ENCODE measurements at regions of chr11 and their contacts with region 1.

Region 1: DNA sequence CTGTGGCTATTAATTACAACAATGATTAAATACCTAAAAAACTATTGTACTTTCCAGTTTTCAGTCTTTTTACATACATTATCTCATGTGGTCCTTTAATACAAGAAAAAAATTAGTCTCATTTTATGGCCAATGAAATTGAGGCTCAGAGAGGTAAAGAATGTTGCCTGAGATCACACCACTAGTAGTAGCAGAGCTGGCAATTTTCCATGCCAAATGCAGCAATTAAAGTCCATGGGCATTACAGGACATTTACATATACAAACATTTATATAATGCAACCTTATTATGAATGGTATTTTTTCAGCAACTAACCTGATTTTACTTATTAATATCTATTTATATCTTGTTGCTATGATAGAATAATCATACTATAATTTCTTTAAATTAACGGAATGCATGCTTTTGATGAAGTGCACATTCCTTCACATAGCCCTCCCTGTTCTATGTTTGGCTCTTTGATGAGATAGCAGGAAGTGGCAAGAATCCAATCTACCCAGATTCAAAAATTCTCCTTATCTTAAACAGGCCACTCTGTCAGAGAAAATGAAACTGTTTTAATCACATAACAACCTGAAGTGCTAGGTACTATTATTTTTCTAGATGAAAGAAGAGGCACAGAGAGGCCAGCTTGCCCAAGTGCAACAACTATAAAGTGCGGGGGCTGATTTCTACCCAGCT is 120.9 kb upstream of the LDLRAD3 start:
- DNase-seq: peak; percentile 15
- H3K4me3 Mint-ChIP-seq: no peak overlapping the region
- H3K27ac Mint-ChIP-seq: peak overlapping the region; percentile 29
- H3K4me1 Mint-ChIP-seq: peaks cover 17% of the 10 kb centered on the region
- H3K27me3 Mint-ChIP-seq: no peaks in the 10 kb centered on the region
- CTCF ChIP-seq: no peak

Region 2: GRCh38 chr11:35662649-35663407 is 160.1 kb before region 1 on chr11 and contains the start of gene TRIM44:
- CTCF ChIA-PET with region 1: interaction called, 3 read pairs
- POLR2A ChIA-PET with region 1: no interaction called
- intact Hi-C with region 1: loop called (anchors 5 kb)
- DNase-seq: peak; percentile 84
- H3K4me3 Mint-ChIP-seq: peak within 1 kb of the TSS; percentile 100
- H3K27ac Mint-ChIP-seq: peak within 1 kb of the TSS; percentile 100
- H3K4me1 Mint-ChIP-seq: peaks cover 25% of the 10 kb centered on the region
- H3K27me3 Mint-ChIP-seq: no peaks in the 10 kb centered on the region
- CTCF ChIP-seq: no peak
- total RNA-seq, gene TRIM44: 98.5 and 103 TPM in 2 replicates

Region 3: DNA sequence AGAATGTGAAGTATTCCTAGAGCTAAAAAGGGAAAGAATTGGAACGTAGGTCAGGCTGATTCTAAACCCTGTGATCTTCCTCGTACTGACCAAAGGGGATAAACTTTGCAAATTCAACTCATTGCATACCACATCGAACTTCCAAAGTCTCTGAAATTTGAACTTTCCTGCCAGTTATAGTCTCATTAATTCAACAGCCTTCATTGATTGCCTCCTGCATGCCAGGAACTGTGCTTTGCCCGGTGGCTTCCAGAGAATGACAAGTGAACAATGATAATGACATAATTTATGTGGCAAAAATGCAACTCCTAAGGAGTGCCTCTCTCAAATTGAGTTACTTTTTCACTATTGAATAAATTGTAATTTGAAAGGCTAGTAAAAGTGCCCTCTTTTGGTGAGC is 13.2 kb after region 1 on chr11:
- CTCF ChIA-PET with region 1: interaction called, 68 read pairs
- POLR2A ChIA-PET with region 1: interaction called, 7 read pairs
- intact Hi-C with region 1: no loop called
- DNase-seq: no peak
- H3K4me3 Mint-ChIP-seq: no peak overlapping the region
- H3K27ac Mint-ChIP-seq: no peak overlapping the region
- H3K4me1 Mint-ChIP-seq: no peaks in the 10 kb centered on the region
- H3K27me3 Mint-ChIP-seq: no peaks in the 10 kb centered on the region
- CTCF ChIP-seq: no peak

Region 4: DNA sequence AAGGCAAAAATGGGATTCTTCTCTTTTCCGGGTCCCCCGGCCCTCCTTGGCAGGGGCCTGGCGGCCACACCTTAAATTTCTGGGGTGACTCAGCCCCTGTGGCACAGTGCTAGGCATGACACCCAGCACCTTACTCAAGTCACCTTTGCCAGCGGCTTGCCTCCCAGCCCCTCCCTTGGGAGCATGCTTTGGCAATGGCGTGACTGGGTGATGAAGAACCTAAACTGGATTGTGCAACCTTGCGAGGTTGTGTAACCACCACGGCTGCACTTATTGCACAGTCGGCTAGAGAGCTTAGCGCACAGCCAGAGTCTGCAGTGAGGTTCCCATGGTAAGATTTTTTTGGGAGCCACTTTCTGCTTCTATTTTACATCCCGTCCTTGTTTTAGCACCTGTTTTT is 104.8 kb after region 1 on chr11:
- CTCF ChIA-PET with region 1: interaction called, 19 read pairs
- POLR2A ChIA-PET with region 1: interaction called, 7 read pairs
- intact Hi-C with region 1: no loop called
- DNase-seq: peak; percentile 99
- H3K4me3 Mint-ChIP-seq: peak overlapping the region; percentile 29
- H3K27ac Mint-ChIP-seq: peak overlapping the region; percentile 91
- H3K4me1 Mint-ChIP-seq: peaks cover 18% of the 10 kb centered on the region
- H3K27me3 Mint-ChIP-seq: no peaks in the 10 kb centered on the region
- CTCF ChIP-seq: no peak

Region 5: GRCh38 chr11:36002196-36002595 is 179.2 kb after region 1 on chr11:
- CTCF ChIA-PET with region 1: interaction called, 13 read pairs
- POLR2A ChIA-PET with region 1: interaction called, 3 read pairs
- intact Hi-C with region 1: loop called (anchors 5 kb)
- DNase-seq: no peak
- H3K4me3 Mint-ChIP-seq: no peak overlapping the region
- H3K27ac Mint-ChIP-seq: peak overlapping the region; percentile 77
- H3K4me1 Mint-ChIP-seq: peaks cover 17% of the 10 kb centered on the region
- H3K27me3 Mint-ChIP-seq: no peaks in the 10 kb centered on the region
- CTCF ChIP-seq: no peak

Region 6: GRCh38 chr11:36073411-36074203 is 250.7 kb after region 1 on chr11:
- CTCF ChIA-PET with region 1: interaction called, 15 read pairs
- POLR2A ChIA-PET with region 1: interaction called, 3 read pairs
- intact Hi-C with region 1: no loop called
- DNase-seq: peak; percentile 34
- H3K4me3 Mint-ChIP-seq: no peak overlapping the region
- H3K27ac Mint-ChIP-seq: peak overlapping the region; percentile 31
- H3K4me1 Mint-ChIP-seq: peaks cover 20% of the 10 kb centered on the region
- H3K27me3 Mint-ChIP-seq: no peaks in the 10 kb centered on the region
- CTCF ChIP-seq: no peak

Measured in MCF 10A (cell line).